ENCODE measurements at regions of chr7 and their contacts with region 1.

Region 1: GRCh38 chr7:33109005-33109757 is at the start of gene RP9:
- DNase-seq: peak; percentile 78
- ATAC-seq: peak; percentile 93
- H3K4me3 Mint-ChIP-seq: peak within 1 kb of the TSS; percentile 88
- H3K27ac Mint-ChIP-seq: peak within 1 kb of the TSS; percentile 70
- H3K4me1 Mint-ChIP-seq: peaks cover 30% of the 10 kb centered on the region
- H3K27me3 Mint-ChIP-seq: peaks cover 7% of the 10 kb centered on the region
- CTCF ChIP-seq: peak; percentile 52
- total RNA-seq, gene RP9: 14.2 to 15.4 TPM

Region 2: DNA sequence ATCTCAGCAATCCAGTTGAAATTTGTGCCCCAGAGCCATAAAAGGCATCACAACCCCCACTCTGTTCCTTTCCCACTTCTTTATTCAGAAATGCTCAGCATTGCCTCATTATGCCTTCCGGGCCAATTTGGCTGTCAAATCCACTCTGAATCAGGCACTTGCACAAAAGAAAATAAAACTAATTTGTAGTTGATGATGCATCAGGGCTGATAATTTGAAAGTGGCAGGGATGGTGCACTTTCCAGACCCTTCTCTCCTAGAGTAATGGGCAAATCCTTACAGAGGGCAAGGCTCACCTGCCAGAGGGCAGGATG is 891.1 kb before region 1 on chr7:
- CTCF ChIA-PET with region 1: no interaction called
- POLR2A ChIA-PET with region 1: no interaction called
- intact Hi-C with region 1: no loop called
- DNase-seq: no peak
- ATAC-seq: no peak
- H3K4me3 Mint-ChIP-seq: no peak overlapping the region
- H3K27ac Mint-ChIP-seq: no peak overlapping the region
- H3K4me1 Mint-ChIP-seq: no peaks in the 10 kb centered on the region
- H3K27me3 Mint-ChIP-seq: no peaks in the 10 kb centered on the region
- CTCF ChIP-seq: no peak

Region 3: GRCh38 chr7:32803406-32804141 is 305.6 kb before region 1 on chr7:
- CTCF ChIA-PET with region 1: interaction called, 19 read pairs
- POLR2A ChIA-PET with region 1: interaction called, 3 read pairs
- intact Hi-C with region 1: no loop called
- DNase-seq: no peak
- ATAC-seq: no peak
- H3K4me3 Mint-ChIP-seq: no peak overlapping the region
- H3K27ac Mint-ChIP-seq: no peak overlapping the region
- H3K4me1 Mint-ChIP-seq: no peaks in the 10 kb centered on the region
- H3K27me3 Mint-ChIP-seq: peaks cover 3% of the 10 kb centered on the region
- CTCF ChIP-seq: no peak

Region 4: DNA sequence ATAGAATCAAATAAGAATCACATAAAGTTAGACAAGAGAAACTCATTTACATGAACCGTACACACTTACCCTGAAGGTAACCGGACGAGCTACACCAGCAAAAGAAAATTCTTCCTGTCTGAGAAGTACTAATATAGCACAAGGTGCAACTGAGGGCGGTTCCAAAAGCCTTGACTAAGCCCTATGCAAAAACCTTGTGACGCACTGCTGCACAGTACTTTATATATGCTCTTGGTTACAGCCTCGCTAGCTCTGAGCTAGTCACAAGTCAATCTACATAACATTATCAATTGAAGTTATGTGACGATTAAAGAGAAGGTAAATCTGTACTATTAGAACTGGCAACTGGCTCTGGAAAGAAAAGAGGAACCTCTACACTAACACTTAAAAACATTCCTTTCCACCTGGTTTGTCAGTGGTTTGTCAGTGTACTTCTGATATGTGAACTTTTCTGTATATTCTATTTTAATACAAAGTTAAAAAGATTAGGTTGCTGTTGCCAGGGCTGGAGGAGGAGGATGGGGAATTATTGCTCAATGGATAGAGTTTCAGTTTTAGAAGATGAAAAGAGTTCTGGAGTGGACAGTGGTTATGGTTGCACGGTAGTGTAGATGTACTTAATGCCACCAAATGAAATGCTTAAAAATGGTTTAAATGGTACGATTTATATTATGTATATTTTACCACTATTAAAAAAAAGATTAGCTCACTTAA is 68.2 kb before region 1 on chr7:
- CTCF ChIA-PET with region 1: interaction called, 16 read pairs
- POLR2A ChIA-PET with region 1: interaction called, 3 read pairs
- intact Hi-C with region 1: loop called (anchors 5 kb)
- DNase-seq: peak; percentile 82
- ATAC-seq: peak; percentile 99
- H3K4me3 Mint-ChIP-seq: peak overlapping the region; percentile 64
- H3K27ac Mint-ChIP-seq: peak overlapping the region; percentile 79
- H3K4me1 Mint-ChIP-seq: peaks cover 52% of the 10 kb centered on the region
- H3K27me3 Mint-ChIP-seq: no peaks in the 10 kb centered on the region
- CTCF ChIP-seq: no peak

Region 5: DNA sequence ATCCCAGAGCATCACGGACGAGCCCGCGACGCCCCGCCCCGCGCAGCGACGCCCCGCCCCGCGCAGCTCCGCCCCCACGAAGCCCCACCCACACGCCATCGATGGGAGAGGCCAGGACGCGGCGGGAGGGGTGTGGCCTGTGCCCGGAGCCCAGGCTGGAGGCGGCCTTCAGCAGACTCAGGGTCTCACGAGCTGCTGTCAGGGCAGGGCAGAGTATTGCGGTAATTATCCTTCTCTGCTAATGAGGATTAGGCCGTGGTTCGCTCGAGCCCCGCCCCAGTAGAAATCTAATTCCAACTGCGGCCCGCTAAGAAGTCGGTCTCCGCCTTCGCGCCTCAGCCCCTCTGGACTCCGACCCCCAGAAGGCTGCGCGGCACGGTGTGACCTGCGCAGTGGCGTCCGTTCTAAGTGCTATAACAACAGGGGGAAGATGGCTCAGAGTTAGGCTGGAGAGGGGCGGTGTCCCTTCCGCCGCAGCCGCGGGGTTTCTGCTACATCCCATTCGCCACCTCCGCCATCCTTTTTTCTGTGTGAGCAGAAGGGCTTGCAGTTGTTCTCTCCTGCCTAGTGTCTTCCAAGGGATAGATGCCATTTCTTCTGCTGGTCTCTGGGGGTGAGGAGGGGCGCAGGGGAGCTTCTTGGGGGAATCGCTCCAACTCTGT is 46.3 kb before region 1 on chr7:
- CTCF ChIA-PET with region 1: interaction called, 41 read pairs
- POLR2A ChIA-PET with region 1: interaction called, 11 read pairs
- intact Hi-C with region 1: loop called (anchors 5 kb)
- DNase-seq: peak; percentile 93
- ATAC-seq: peak; percentile 94
- H3K4me3 Mint-ChIP-seq: peak overlapping the region; percentile 95
- H3K27ac Mint-ChIP-seq: peak overlapping the region; percentile 90
- H3K4me1 Mint-ChIP-seq: peaks cover 27% of the 10 kb centered on the region
- H3K27me3 Mint-ChIP-seq: no peaks in the 10 kb centered on the region
- CTCF ChIP-seq: no peak

Region 6: GRCh38 chr7:33091111-33091531 is 18.1 kb before region 1 on chr7:
- CTCF ChIA-PET with region 1: interaction called, 11 read pairs
- POLR2A ChIA-PET with region 1: no interaction called
- intact Hi-C with region 1: no loop called
- DNase-seq: no peak
- ATAC-seq: no peak
- H3K4me3 Mint-ChIP-seq: no peak overlapping the region
- H3K27ac Mint-ChIP-seq: no peak overlapping the region
- H3K4me1 Mint-ChIP-seq: no peaks in the 10 kb centered on the region
- H3K27me3 Mint-ChIP-seq: peaks cover 1% of the 10 kb centered on the region
- CTCF ChIP-seq: no peak

Region 7: GRCh38 chr7:33191340-33191739 is 82.2 kb after region 1 on chr7:
- CTCF ChIA-PET with region 1: no interaction called
- POLR2A ChIA-PET with region 1: no interaction called
- intact Hi-C with region 1: no loop called
- DNase-seq: peak; percentile 18
- ATAC-seq: peak; percentile 89
- H3K4me3 Mint-ChIP-seq: no peak overlapping the region
- H3K27ac Mint-ChIP-seq: peak overlapping the region; percentile 46
- H3K4me1 Mint-ChIP-seq: peaks cover 18% of the 10 kb centered on the region
- H3K27me3 Mint-ChIP-seq: no peaks in the 10 kb centered on the region
- CTCF ChIP-seq: no peak

Region 8: DNA sequence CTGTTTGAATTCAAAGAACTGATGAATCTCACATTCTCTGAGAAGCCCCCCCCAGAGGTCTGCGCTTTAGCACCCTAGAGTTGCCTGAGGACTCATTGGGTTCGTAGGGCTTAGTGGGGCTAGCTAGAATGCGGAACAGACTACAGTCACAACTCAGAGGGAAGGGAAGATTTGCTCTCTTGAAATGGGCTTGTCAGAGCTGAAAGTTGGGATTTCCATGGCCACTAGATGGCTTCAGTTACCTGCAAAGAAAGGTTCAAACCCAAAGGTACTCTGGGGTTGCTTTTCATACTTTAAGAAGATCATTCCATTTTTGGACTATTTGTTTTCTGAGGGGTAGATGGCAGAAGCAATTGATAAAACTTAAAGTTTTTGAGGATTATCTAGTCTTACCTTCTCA is 225.2 kb after region 1 on chr7:
- CTCF ChIA-PET with region 1: no interaction called
- POLR2A ChIA-PET with region 1: no interaction called
- intact Hi-C with region 1: no loop called
- DNase-seq: peak; percentile 2
- ATAC-seq: no peak
- H3K4me3 Mint-ChIP-seq: no peak overlapping the region
- H3K27ac Mint-ChIP-seq: no peak overlapping the region
- H3K4me1 Mint-ChIP-seq: no peaks in the 10 kb centered on the region
- H3K27me3 Mint-ChIP-seq: no peaks in the 10 kb centered on the region
- CTCF ChIP-seq: no peak